Calu3 (cell line): ENCODE measurements at regions of chr1 and their contacts with region 1.

Region 1: DNA sequence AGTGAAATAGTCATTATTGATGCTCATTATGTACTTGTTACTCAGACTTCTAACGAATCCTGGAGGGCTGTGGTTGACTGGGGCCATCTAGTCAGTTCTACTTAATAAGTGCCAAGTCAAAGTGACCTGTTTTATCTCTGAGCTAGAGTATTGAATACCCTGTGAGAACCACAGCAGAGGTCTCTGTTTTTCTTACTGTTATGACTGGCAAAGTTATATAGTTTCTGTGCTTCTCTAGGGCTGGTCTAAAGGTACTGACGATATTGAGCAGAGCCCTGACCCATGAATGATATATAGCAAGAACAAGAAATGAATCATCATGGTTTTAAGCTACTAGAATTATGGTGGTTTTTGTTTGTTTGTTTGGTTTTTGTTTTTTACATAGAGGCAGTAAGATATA is 555.8 kb downstream of the PLA2G4A start:
- DNase-seq: no peak
- H3K4me3 Mint-ChIP-seq: no peak overlapping the region
- H3K27ac Mint-ChIP-seq: no peak overlapping the region
- H3K4me1 Mint-ChIP-seq: no peaks in the 10 kb centered on the region
- H3K27me3 Mint-ChIP-seq: no peaks in the 10 kb centered on the region
- CTCF ChIP-seq: no peak

Region 2: GRCh38 chr1:187051618-187052232 is 332.8 kb before region 1 on chr1:
- CTCF ChIA-PET with region 1: no interaction called
- intact Hi-C with region 1: loop called (anchors 10 kb)
- DNase-seq: peak; percentile 61
- H3K4me3 Mint-ChIP-seq: no peak overlapping the region
- H3K27ac Mint-ChIP-seq: no peak overlapping the region
- H3K4me1 Mint-ChIP-seq: peaks cover 13% of the 10 kb centered on the region
- H3K27me3 Mint-ChIP-seq: no peaks in the 10 kb centered on the region
- CTCF ChIP-seq: peak; percentile 40

Region 3: DNA sequence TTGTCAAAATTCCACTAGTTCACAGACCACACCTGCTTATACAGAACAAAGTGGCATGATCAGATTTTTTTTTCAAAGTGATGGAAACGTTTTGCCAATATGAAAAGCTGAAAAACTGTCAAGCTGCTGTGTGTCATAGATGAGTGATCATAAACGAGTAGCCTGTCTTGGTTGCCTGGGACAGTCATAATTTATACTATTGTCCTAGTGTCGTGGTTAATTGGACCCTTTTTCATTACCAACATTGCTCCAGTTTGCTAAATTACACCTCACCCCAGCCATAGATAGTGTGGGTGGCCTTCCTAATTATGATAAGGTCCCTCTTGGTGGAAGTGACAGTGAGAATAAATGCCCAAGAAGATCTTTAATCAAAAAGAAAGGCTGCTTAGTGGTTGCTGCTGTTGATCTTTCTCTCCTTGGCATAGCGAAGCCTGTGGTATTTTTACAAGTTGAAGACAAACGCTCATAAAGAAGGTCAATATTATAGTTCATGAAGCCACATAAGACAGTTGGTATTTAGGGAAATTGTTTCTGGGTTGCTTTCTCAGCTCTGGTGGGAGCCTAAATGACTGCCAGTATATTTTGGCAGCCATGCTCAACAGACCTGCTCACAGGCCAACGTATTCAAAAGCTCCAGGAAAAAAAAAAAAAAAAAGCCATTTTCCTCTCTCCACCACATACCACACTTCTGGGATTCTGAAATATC is 77.6 kb before region 1 on chr1:
- CTCF ChIA-PET with region 1: no interaction called
- intact Hi-C with region 1: no loop called
- DNase-seq: no peak
- H3K4me3 Mint-ChIP-seq: no peak overlapping the region
- H3K27ac Mint-ChIP-seq: no peak overlapping the region
- H3K4me1 Mint-ChIP-seq: peaks cover 8% of the 10 kb centered on the region
- H3K27me3 Mint-ChIP-seq: no peaks in the 10 kb centered on the region
- CTCF ChIP-seq: no peak